Activated CD4-positive, alpha-beta memory T cell treated with anti-CD3 and anti-CD28 coated beads, Interleukin-2, amount 10 ng/mL, durations not matched to agents 7 days and 5 days (primary cell): ENCODE measurements at regions of chr10 and their contacts with region 1.

Region 1: DNA sequence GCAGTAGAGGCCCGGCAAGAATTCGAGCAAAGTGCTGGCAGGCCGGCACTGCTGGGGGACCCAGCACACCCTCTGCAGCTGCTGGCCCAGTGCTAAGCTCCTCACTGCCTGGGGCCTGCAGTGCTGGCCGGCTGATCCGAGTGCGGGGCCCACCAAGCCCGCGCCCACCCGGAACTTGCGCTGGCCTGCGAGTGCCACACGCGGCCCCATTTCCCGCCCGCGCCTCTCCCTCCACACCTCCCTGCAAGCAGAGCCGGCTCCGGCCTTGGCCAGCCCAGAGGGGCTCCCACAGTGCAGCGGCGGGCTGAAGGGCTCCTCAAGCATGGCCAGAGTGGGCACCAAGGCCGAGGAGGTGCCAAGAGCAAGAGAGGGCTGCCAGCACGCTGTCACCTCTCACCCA is 3.1 kb downstream of the DYDC2 start:
- DNase-seq: no peak
- H3K4me3 Mint-ChIP-seq: no peak overlapping the region
- H3K27ac Mint-ChIP-seq: no peak overlapping the region
- H3K4me1 Mint-ChIP-seq: peaks cover 5% of the 10 kb centered on the region
- H3K27me3 Mint-ChIP-seq: peaks cover 45% of the 10 kb centered on the region

Region 2: GRCh38 chr10:80382989-80383388 is 23.3 kb after region 1 on chr10:
- CTCF ChIA-PET with region 1: interaction called, 10 read pairs
- POLR2A ChIA-PET with region 1: no interaction called
- DNase-seq: peak; percentile 53
- H3K4me3 Mint-ChIP-seq: no peak overlapping the region
- H3K27ac Mint-ChIP-seq: no peak overlapping the region
- H3K4me1 Mint-ChIP-seq: peaks cover 12% of the 10 kb centered on the region
- H3K27me3 Mint-ChIP-seq: peaks cover 10% of the 10 kb centered on the region